Ovary (tissue), 10 donors: ENCODE measurements at regions of chr6 and their contacts with region 1.

Region 1: GRCh38 chr6:28981833-28982475 is 23.2 kb downstream of the ZNF311 start:
- DNase-seq: peak; percentile 70 to 90 (median 83)
- H3K4me3 ChIP-seq: peak overlapping the region; percentile 69
- H3K27ac ChIP-seq: peak overlapping the region in 1 of 2 donors; percentile 71
- H3K4me1 ChIP-seq: peaks cover 3% of the 10 kb centered on the region
- H3K27me3 ChIP-seq: no peaks in the 10 kb centered on the region
- CTCF ChIP-seq: peak in 1 of 3 donors; percentile 22
- EP300 ChIP-seq: no peak
- POLR2A ChIP-seq: no peak

Region 2: DNA sequence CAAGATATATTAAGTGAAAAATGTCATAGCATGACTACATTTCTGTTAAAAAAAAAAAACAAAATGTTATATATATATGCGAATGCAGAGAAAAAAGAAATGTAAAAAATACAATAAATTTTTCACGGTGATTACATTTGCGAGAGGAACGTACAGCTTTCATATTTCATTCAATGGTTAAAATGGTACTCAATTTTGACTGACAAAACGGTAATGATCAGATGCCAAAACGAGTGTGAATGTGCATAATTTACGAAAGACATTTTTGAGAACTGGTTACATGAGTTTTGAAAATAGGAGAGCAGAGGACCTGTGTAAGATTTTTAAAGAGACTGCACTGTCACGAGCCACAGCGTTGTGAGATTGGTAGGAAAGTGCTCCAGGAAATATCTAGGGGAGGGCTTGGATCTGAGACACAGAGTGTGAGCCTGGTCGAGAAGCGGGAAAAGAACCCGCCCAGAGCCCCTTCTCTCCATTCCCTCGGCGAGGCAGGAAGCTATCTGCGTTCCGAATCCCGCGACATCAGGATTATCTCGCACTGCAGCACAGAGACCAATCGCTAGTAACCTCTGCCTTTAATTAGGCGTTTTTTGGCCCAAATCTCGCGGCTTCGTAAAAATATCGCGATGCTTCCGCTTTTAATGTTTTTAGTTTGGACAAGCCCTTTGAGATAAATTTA is 86.7 kb before region 1 on chr6:
- intact Hi-C with region 1: loop called in 3 of 4 experiments (anchors 5 to 10 kb)
- DNase-seq: peak; percentile 90 to 97 (median 92)
- H3K4me3 ChIP-seq: peak overlapping the region; percentile 59
- H3K27ac ChIP-seq: peak overlapping the region; percentile 98 to 99
- H3K4me1 ChIP-seq: no peaks in the 10 kb centered on the region
- H3K27me3 ChIP-seq: no peaks in the 10 kb centered on the region
- CTCF ChIP-seq: no peak
- EP300 ChIP-seq: no peak
- POLR2A ChIP-seq: peak; percentile 58

Region 3: GRCh38 chr6:28923318-28924102 is 58.4 kb before region 1 on chr6 and contains the start of gene TRIM27:
- intact Hi-C with region 1: loop called in 1 of 4 experiments (anchors 1 kb)
- DNase-seq: peak; percentile 87 to 95 (median 92)
- H3K4me3 ChIP-seq: peak within 1 kb of the TSS; percentile 89
- H3K27ac ChIP-seq: peak within 1 kb of the TSS; percentile 48 to 88
- H3K4me1 ChIP-seq: peaks cover 11% of the 10 kb centered on the region
- H3K27me3 ChIP-seq: no peaks in the 10 kb centered on the region
- CTCF ChIP-seq: peak in 2 of 3 donors; percentile 21 to 39
- EP300 ChIP-seq: no peak
- POLR2A ChIP-seq: peak; percentile 79
- total RNA-seq, gene TRIM27: 43.7 to 57.6 (median 48.8) TPM

Region 4: DNA sequence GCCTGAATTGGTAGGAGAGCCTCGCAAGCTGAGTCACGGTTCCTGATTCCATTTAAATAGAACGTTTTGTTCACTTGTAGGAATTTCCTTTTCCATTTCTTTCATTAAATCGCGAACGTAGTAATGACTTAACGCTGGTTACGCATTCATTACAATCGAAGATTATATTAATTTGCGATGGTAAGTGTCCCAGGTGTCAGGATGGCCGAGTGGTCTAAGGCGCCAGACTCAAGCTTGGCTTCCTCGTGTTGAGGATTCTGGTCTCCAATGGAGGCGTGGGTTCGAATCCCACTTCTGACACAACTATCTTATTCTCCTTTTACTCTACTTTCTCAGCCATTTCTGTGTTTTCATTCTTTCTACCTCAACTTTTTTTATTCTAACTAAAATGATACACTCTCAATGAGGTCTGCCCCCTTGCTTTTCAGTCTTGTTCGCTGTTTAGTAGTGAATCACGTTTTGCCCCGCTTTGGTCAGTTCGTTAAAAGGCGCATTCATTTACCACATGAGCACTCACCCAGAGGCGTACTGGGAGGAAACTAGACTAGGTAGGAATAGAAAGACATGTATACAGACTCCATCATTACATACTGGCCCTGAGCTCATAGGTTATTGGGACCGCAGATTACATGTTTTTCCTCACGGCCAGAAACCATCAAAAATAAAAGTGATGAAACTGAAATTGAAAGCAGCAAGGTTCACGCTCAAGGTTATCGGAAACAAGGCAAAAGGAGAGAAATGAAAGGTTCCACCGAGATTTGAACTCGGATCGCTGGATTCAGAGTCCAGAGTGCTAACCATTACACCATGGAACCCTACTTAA is 40.9 kb before region 1 on chr6:
- intact Hi-C with region 1: loop called in 3 of 4 experiments (anchors 2 to 5 kb)
- DNase-seq: peak; percentile 79 to 91 (median 82)
- H3K4me3 ChIP-seq: peak overlapping the region; percentile 67
- H3K27ac ChIP-seq: peak overlapping the region; percentile 80 to 81
- H3K4me1 ChIP-seq: peaks cover 2% of the 10 kb centered on the region
- H3K27me3 ChIP-seq: no peaks in the 10 kb centered on the region
- CTCF ChIP-seq: no peak
- EP300 ChIP-seq: no peak
- POLR2A ChIP-seq: no peak